Activated B cell treated with CpG ODN at 0.5 μM for 24 hours (primary cell): ENCODE measurements at regions of chr6 and their contacts with region 1.

Region 1: DNA sequence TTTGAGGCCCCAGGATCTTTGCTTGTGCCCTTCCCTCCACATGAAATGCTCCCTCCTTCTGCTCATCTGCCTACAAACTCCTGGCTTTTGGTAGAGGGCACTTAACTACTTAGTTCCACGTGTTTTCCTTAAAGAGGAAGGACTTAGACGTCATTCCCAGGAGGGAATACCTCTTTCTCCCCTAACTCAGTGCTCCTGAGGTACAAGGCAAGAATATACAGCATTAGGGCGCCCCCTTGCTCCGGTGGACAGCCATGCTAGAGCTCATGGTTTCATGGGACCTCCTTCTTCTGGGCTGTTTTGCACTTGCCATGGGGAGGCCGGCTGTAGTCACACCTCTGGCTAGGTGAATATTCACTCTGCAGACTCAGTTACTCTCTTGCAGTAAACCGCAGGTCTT is 93.8 kb upstream of the LY86 start:
- DNase-seq: peak; percentile 34
- ATAC-seq: peak; percentile 49
- H3K4me3 Mint-ChIP-seq: no peak overlapping the region
- H3K27ac Mint-ChIP-seq: peak overlapping the region; percentile 53
- H3K4me1 Mint-ChIP-seq: no peaks in the 10 kb centered on the region
- H3K27me3 Mint-ChIP-seq: peaks cover 2% of the 10 kb centered on the region
- CTCF ChIP-seq: no peak

Region 2: GRCh38 chr6:6057424-6058053 is 437.1 kb before region 1 on chr6:
- CTCF ChIA-PET with region 1: interaction called, 49 read pairs
- POLR2A ChIA-PET with region 1: interaction called, 4 read pairs
- intact Hi-C with region 1: loop called (anchors 1 kb)
- DNase-seq: no peak
- ATAC-seq: peak; percentile 66
- H3K4me3 Mint-ChIP-seq: no peak overlapping the region
- H3K27ac Mint-ChIP-seq: no peak overlapping the region
- H3K4me1 Mint-ChIP-seq: no peaks in the 10 kb centered on the region
- H3K27me3 Mint-ChIP-seq: peaks cover 37% of the 10 kb centered on the region
- CTCF ChIP-seq: peak; percentile 42

Region 3: DNA sequence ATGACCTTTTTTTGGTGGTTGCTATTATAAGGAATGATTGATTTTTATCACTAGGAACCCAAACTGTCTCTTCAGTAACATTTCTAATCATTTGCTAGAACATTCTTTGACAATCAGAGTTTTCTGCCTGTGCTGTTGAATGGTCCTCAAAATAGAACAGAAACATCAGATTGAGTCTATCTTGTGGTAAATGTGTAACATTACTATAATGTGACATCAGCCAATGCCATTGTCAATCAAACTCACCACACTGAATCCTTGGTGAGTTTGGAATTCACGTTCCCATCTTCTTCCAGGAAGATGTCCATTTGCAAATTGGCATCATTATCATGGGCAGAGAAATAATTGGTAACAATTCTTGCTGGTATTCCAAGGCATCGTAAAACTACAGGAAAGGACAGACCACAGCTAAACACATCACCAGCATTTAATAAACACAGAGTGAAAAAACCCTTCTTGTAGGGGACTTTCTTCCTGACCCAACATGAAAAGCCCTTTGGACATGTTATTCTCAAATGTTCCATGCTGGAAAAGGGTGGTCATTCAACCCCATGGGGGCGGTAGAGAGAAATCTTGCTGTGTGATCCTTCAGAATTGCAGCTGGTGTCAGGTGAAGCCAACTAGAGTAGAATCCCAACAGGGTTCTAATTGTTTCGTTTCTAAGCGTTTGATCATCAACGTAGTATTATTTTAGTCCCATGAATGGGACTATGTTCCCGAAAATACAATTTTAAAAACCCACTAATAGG is 272.7 kb before region 1 on chr6:
- CTCF ChIA-PET with region 1: interaction called, 13 read pairs
- POLR2A ChIA-PET with region 1: no interaction called
- intact Hi-C with region 1: loop called (anchors 1 kb)
- DNase-seq: no peak
- ATAC-seq: no peak
- H3K4me3 Mint-ChIP-seq: no peak overlapping the region
- H3K27ac Mint-ChIP-seq: no peak overlapping the region
- H3K4me1 Mint-ChIP-seq: no peaks in the 10 kb centered on the region
- H3K27me3 Mint-ChIP-seq: peaks cover 21% of the 10 kb centered on the region
- CTCF ChIP-seq: no peak

Region 4: DNA sequence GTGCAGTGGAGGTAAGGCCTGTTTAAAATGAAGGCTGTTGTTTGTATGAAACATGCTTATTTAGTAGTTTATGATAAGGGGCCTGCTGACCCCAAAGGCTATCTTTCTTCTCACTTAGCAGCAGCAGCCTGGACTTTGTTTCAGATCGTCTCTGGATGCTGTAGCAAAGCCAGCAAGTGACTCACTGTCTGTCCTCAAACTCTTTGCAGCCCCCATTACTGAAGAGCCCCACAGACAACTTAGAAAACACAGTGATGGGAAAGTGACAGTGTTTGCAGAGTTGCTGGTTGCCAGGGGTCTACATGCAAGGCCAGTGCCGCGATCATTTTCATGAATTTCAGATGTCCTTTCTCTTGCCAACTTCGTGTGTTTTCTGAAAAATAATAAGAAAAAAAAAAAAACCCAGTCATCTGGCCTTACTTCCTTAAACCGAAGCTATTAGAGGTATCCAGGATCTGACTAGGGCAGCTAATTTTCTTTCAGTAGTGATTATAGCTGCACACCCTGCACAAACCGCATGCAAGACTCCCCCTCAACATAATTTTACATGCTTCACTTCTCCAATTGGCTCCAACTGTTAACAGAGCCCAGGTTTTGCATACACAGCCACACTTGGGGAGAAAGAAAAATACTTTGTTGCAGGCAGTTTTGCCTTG is 162.6 kb before region 1 on chr6:
- CTCF ChIA-PET with region 1: interaction called, 4 read pairs
- POLR2A ChIA-PET with region 1: interaction called, 4 read pairs
- intact Hi-C with region 1: loop called (anchors 5 kb)
- DNase-seq: no peak
- ATAC-seq: peak; percentile 72
- H3K4me3 Mint-ChIP-seq: peak overlapping the region; percentile 81
- H3K27ac Mint-ChIP-seq: peak overlapping the region; percentile 100
- H3K4me1 Mint-ChIP-seq: peaks cover 48% of the 10 kb centered on the region
- H3K27me3 Mint-ChIP-seq: no peaks in the 10 kb centered on the region
- CTCF ChIP-seq: no peak

Region 5: DNA sequence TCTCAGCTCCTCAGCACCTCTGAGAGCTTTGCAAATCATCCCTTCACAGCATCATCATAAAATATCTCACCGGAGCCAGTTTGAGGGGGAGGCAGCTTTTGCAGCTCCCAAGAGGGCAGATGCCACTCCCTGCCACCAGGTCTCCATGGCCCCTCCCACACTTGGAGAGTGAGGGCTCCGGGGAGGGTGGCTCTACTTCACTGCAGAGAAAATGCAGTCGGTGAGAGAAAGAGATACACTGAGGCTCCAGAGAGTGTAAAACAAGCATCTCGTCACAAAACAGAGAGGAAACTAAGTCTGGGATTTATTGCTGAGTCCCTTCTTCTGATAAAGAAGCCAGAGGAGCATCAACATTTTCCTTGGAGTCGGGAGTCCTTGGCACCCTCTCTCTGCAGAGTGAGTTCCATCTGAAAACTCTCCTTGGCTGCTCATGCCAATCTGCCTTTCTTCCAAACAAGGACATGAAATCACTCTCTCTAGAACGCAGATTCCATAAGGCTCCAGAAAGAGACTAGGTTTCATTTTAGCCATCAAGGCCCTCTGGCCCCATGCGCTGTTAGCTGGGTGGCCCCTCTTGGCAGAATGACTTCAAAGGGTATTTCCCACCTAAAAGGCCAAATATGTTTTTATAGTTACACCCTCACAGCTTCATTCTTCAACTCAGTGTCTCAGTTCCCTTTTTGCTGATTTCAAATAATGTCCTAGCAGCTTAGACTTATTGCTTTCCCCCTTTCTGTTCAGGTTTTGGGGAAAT is 103.7 kb before region 1 on chr6:
- CTCF ChIA-PET with region 1: interaction called, 7 read pairs
- POLR2A ChIA-PET with region 1: interaction called, 4 read pairs
- intact Hi-C with region 1: loop called (anchors 5 kb)
- DNase-seq: peak; percentile 42
- ATAC-seq: peak; percentile 78
- H3K4me3 Mint-ChIP-seq: peak overlapping the region; percentile 77
- H3K27ac Mint-ChIP-seq: peak overlapping the region; percentile 96
- H3K4me1 Mint-ChIP-seq: peaks cover 63% of the 10 kb centered on the region
- H3K27me3 Mint-ChIP-seq: peaks cover 2% of the 10 kb centered on the region
- CTCF ChIP-seq: no peak

Region 6: GRCh38 chr6:6414931-6415330 is 79.7 kb before region 1 on chr6:
- CTCF ChIA-PET with region 1: no interaction called
- POLR2A ChIA-PET with region 1: no interaction called
- intact Hi-C with region 1: no loop called
- DNase-seq: no peak
- ATAC-seq: no peak
- H3K4me3 Mint-ChIP-seq: no peak overlapping the region
- H3K27ac Mint-ChIP-seq: no peak overlapping the region
- H3K4me1 Mint-ChIP-seq: no peaks in the 10 kb centered on the region
- H3K27me3 Mint-ChIP-seq: peaks cover 12% of the 10 kb centered on the region
- CTCF ChIP-seq: no peak